CD4-positive, alpha-beta T cell (primary cell): ENCODE measurements at regions of chr1 and their contacts with region 1.

Region 1: DNA sequence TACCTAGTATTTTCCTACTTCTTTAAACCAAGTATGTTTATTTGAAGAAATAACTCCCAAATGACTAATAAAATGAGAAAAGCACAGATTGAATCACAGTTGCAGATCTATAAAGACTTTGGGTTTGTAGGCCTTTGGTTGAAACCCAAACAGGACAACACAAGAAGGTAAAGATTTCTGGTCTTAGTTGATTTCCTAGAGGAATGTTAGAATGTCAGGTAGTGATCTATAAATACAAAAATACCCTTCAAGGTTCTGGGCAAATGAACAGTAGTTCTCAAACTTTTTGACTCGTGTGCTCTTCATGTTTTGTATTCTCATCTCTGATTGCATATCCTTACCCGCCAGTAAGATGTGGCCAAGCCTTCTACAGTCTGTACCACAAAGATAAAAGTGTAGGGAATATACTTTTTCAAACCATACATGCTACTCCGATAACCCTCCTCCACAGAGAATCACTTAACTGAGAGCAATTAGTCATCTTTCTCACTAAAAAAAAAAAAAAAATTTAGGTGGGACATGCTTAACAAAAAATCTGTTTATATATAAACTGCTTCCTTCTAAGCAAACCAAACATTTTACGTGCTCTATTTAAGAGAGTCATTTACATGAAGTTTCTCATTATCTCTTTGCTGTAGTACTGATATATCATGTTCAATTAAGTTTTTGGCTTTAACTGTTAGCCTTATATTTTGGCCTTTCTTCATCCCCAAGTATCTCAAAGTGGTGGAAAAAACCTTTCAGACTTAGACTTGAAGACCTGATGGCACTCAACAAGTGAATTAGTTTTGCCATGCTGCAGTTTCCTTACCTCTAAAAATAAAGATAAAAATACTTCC is 36.0 kb downstream of the CNIH4 start:
- DNase-seq: no peak
- ATAC-seq: peak; percentile 30
- H3K4me3 ChIP-seq: no peak overlapping the region
- H3K4me3 Mint-ChIP-seq: peak overlapping the region; percentile 20
- H3K27ac ChIP-seq: no peak overlapping the region
- H3K27ac Mint-ChIP-seq: peak overlapping the region; percentile 62
- H3K4me1 ChIP-seq: peaks cover 3% of the 10 kb centered on the region
- H3K4me1 Mint-ChIP-seq: peaks cover 49% of the 10 kb centered on the region
- H3K27me3 ChIP-seq: no peaks in the 10 kb centered on the region
- H3K27me3 Mint-ChIP-seq: no peaks in the 10 kb centered on the region
- CTCF ChIP-seq: no peak

Region 2: DNA sequence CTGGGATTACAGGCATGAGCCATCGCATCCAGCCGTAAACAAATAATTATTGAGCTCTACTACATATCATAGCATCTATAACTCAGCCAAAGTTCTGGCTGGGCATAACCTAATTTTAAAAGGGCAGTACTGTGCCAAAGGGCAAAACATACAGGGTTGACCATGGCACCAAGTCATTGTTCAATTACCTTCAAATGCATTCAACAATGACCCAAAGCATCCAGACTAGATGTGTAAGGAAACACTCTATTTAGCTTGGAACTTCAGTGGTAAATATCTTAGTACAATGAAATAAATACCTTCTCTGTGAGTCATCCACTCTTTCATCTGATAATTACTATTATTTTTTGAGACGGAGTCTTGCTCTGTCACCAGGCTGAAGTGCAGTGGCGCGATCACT is 132.7 kb before region 1 on chr1:
- CTCF ChIA-PET with region 1: no interaction called
- POLR2A ChIA-PET with region 1: no interaction called
- intact Hi-C with region 1: no loop called
- DNase-seq: no peak
- ATAC-seq: no peak
- H3K4me3 ChIP-seq: no peak overlapping the region
- H3K4me3 Mint-ChIP-seq: no peak overlapping the region
- H3K27ac ChIP-seq: no peak overlapping the region
- H3K27ac Mint-ChIP-seq: no peak overlapping the region
- H3K4me1 ChIP-seq: peaks cover 4% of the 10 kb centered on the region
- H3K4me1 Mint-ChIP-seq: peaks cover 19% of the 10 kb centered on the region
- H3K27me3 ChIP-seq: no peaks in the 10 kb centered on the region
- H3K27me3 Mint-ChIP-seq: no peaks in the 10 kb centered on the region
- CTCF ChIP-seq: no peak

Region 3: GRCh38 chr1:224427346-224427745 is 34.7 kb after region 1 on chr1:
- CTCF ChIA-PET with region 1: interaction called, 4 read pairs
- POLR2A ChIA-PET with region 1: interaction called, 17 read pairs
- intact Hi-C with region 1: loop called (anchors 5 kb)
- DNase-seq: no peak
- ATAC-seq: no peak
- H3K4me3 ChIP-seq: no peak overlapping the region
- H3K4me3 Mint-ChIP-seq: no peak overlapping the region
- H3K27ac ChIP-seq: no peak overlapping the region
- H3K27ac Mint-ChIP-seq: peak overlapping the region; percentile 56
- H3K4me1 ChIP-seq: peaks cover 14% of the 10 kb centered on the region
- H3K4me1 Mint-ChIP-seq: peaks cover 75% of the 10 kb centered on the region
- H3K27me3 ChIP-seq: no peaks in the 10 kb centered on the region
- H3K27me3 Mint-ChIP-seq: no peaks in the 10 kb centered on the region
- CTCF ChIP-seq: no peak

Region 4: DNA sequence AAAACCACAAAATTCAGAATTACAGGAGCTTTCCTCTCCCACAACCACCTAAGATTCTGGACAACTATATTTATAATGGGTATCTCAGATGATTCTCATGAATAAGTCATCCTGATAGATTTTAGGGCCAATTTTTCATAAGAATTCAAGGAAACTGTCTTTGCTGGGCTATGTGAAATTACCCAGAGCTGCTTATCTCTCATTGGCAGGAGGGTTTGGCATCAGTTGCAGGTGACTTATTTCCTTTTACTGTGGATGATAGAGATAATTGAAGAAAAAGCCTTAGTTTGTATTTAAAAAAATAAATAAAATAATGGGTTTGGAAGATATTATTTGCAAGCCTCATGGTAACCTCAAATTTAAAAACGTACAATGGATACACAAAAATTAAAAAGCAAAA is 80.2 kb after region 1 on chr1:
- CTCF ChIA-PET with region 1: no interaction called
- POLR2A ChIA-PET with region 1: no interaction called
- intact Hi-C with region 1: no loop called
- DNase-seq: no peak
- ATAC-seq: no peak
- H3K4me3 ChIP-seq: no peak overlapping the region
- H3K4me3 Mint-ChIP-seq: no peak overlapping the region
- H3K27ac ChIP-seq: no peak overlapping the region
- H3K27ac Mint-ChIP-seq: no peak overlapping the region
- H3K4me1 ChIP-seq: no peaks in the 10 kb centered on the region
- H3K4me1 Mint-ChIP-seq: no peaks in the 10 kb centered on the region
- H3K27me3 ChIP-seq: no peaks in the 10 kb centered on the region
- H3K27me3 Mint-ChIP-seq: no peaks in the 10 kb centered on the region
- CTCF ChIP-seq: no peak